Breast epithelium (tissue), 4 donors: ENCODE measurements at regions of chr3 and their contacts with region 1.

Region 1: GRCh38 chr3:183613366-183614285 is 21.8 kb upstream of the KLHL24 start:
- DNase-seq: no peak
- H3K4me3 ChIP-seq: no peak overlapping the region
- H3K27ac ChIP-seq: no peak overlapping the region
- H3K4me1 ChIP-seq: no peaks in the 10 kb centered on the region
- H3K27me3 ChIP-seq: no peaks in the 10 kb centered on the region
- CTCF ChIP-seq: no peak
- POLR2A ChIP-seq: no peak

Region 2: GRCh38 chr3:183680061-183680460 is 66.4 kb after region 1 on chr3:
- intact Hi-C with region 1: loop called (anchors 2 kb)
- DNase-seq: no peak
- H3K4me3 ChIP-seq: no peak overlapping the region
- H3K27ac ChIP-seq: no peak overlapping the region
- H3K4me1 ChIP-seq: no peaks in the 10 kb centered on the region
- H3K27me3 ChIP-seq: no peaks in the 10 kb centered on the region
- CTCF ChIP-seq: no peak
- POLR2A ChIP-seq: no peak